Activated CD4-positive, alpha-beta T cell treated with anti-CD3 and anti-CD28 coated beads for 36 hours (primary cell): ENCODE measurements at regions of chr2 and their contacts with region 1.

Region 1: GRCh38 chr2:230798769-230799399 is 65.9 kb upstream of the ITM2C start:
- DNase-seq: peak; percentile 63
- ATAC-seq: no peak
- H3K4me3 Mint-ChIP-seq: no peak overlapping the region
- H3K27ac Mint-ChIP-seq: peak overlapping the region; percentile 82
- H3K4me1 Mint-ChIP-seq: peaks cover 18% of the 10 kb centered on the region
- H3K27me3 Mint-ChIP-seq: no peaks in the 10 kb centered on the region

Region 2: GRCh38 chr2:230007931-230008707 is 790.8 kb before region 1 on chr2:
- CTCF ChIA-PET with region 1: interaction called, 8 read pairs
- POLR2A ChIA-PET with region 1: no interaction called
- intact Hi-C with region 1: loop called (anchors 5 kb)
- DNase-seq: peak; percentile 92
- ATAC-seq: peak; percentile 69
- H3K4me3 Mint-ChIP-seq: no peak overlapping the region
- H3K27ac Mint-ChIP-seq: no peak overlapping the region
- H3K4me1 Mint-ChIP-seq: peaks cover 5% of the 10 kb centered on the region
- H3K27me3 Mint-ChIP-seq: no peaks in the 10 kb centered on the region

Region 3: DNA sequence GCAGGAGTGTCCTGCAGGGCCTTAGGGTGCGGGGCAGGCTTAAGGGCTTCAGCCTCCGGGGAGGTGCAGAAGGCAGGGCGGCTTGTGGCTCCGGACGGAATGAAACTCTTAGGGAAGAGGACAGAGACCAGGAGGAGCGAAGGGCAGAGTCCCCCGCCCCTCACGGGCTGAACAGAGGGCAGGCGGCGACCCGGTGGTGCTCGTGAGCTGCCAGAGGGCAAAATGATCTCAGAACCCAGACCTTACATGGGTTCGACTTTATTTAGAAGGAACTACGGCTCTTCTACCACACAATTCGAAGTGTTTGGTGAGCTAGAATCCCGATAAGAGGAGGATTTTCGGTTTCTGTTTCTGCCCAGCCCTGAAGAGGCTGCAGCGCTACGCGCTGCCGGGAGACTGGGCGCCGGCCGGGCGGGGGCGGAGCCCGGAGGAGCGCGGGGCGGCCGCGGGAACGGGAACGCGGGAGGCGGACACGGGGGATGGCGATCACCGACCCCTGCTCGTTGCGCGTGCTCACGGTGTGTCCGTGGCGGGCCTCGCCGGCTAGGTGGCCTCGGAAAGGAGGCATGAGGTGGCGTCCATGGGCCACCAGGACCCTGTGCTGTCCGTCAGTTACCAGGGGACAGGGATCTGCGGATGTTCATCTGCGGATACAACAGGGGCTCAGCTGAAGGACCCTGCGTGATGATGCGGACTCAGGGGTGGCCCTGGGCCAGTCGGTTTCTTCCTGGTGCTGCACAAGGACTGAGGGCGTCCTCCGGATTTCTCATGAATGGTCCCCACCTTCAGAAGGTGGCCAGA is 387.1 kb before region 1 on chr2:
- CTCF ChIA-PET with region 1: interaction called, 3 read pairs
- POLR2A ChIA-PET with region 1: no interaction called
- intact Hi-C with region 1: loop called (anchors 2 to 10 kb)
- DNase-seq: peak; percentile 76
- ATAC-seq: peak; percentile 66
- H3K4me3 Mint-ChIP-seq: peak overlapping the region; percentile 85
- H3K27ac Mint-ChIP-seq: peak overlapping the region; percentile 96
- H3K4me1 Mint-ChIP-seq: peaks cover 60% of the 10 kb centered on the region
- H3K27me3 Mint-ChIP-seq: no peaks in the 10 kb centered on the region

Region 4: GRCh38 chr2:230472621-230473018 is 326.3 kb before region 1 on chr2:
- CTCF ChIA-PET with region 1: interaction called, 3 read pairs
- POLR2A ChIA-PET with region 1: no interaction called
- intact Hi-C with region 1: loop called in 1 of 2 experiments (anchors 5 kb)
- DNase-seq: peak; percentile 77
- ATAC-seq: peak; percentile 95
- H3K4me3 Mint-ChIP-seq: peak overlapping the region; percentile 17
- H3K27ac Mint-ChIP-seq: peak overlapping the region; percentile 81
- H3K4me1 Mint-ChIP-seq: peaks cover 35% of the 10 kb centered on the region
- H3K27me3 Mint-ChIP-seq: no peaks in the 10 kb centered on the region

Region 5: DNA sequence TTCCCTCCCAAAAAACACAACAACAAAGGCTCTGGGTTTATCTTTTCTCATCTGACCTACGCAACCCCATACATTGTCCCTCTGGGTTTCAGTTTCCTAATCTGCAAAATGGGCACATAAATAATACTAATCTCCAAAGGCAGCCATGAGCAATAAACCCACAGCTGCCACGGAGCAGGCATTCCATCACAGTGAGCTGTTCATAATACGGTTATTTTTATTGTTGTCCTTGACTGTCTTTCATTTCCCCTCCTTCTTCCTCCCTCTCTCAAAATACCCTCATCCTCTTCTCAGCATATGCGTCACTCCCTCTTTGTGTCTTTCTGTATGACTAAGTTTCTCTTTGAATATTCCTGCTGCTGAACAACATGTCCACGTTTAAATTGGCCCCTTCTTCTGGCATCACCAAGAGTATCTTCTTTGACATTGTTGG is 216.0 kb before region 1 on chr2:
- CTCF ChIA-PET with region 1: no interaction called
- POLR2A ChIA-PET with region 1: no interaction called
- intact Hi-C with region 1: no loop called
- DNase-seq: peak; percentile 70
- ATAC-seq: peak; percentile 93
- H3K4me3 Mint-ChIP-seq: no peak overlapping the region
- H3K27ac Mint-ChIP-seq: peak overlapping the region; percentile 75
- H3K4me1 Mint-ChIP-seq: peaks cover 25% of the 10 kb centered on the region
- H3K27me3 Mint-ChIP-seq: no peaks in the 10 kb centered on the region

Region 6: DNA sequence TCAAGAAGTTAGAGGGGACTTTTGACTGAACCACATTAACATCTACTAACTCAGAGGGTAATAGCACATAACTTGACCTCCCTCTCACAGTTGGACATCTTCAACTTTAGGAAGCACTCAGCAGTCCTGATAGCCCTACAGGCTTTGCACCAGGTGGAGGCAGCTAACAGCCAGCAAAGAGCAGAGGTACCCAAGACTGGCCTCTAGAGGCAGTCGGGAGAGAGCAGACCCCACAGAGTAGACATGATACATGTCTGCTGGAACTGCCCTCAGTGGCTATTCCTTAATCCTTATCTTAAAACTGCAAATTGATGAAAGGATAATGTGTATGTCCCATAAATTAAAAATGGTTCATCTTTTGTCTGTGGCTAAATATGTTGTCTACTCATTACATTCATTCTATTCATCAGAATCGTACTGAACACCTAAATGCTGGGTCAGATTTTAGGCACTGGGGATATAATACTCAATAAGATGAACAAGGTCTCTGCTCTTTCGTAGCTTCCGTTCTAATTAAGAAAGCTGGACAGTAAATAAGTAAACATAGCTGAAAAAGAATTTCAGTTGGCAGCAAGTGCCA is 36.5 kb before region 1 on chr2:
- CTCF ChIA-PET with region 1: interaction called, 12 read pairs
- POLR2A ChIA-PET with region 1: no interaction called
- intact Hi-C with region 1: no loop called
- DNase-seq: peak; percentile 44
- ATAC-seq: peak; percentile 80
- H3K4me3 Mint-ChIP-seq: no peak overlapping the region
- H3K27ac Mint-ChIP-seq: peak overlapping the region; percentile 20
- H3K4me1 Mint-ChIP-seq: peaks cover 69% of the 10 kb centered on the region
- H3K27me3 Mint-ChIP-seq: no peaks in the 10 kb centered on the region

Region 7: DNA sequence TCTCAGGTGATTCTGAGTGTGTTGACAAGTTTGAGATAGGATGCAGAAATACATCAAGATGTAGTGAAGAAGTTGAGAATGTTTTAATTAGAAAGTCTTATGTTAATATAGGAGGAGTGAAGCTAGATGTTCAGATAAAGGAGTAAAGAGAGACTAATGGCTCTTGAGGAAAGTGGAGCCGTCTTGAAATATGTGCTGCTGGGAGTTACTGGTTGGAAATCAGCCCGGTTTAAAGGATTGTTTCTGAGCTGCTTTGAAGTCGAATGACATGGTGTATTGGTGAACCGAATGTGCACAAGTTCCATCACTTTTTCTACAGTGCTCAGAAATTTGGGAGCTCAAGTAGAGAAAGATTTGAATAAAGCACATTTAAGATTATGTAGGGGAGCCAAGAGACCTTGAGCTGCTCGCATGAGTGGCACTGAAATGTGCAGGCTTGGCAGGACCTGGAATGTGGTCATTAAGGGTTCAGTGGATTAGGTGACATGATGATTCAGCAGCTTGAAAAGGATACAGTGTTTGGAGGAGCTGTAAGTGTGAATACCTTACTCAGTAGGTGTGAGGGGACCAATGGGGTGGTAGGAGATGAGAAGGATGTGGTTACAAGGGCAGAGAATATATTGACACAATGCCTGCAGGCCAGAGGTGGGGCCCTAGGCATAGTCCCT is 17.6 kb before region 1 on chr2:
- CTCF ChIA-PET with region 1: interaction called, 24 read pairs
- POLR2A ChIA-PET with region 1: interaction called, 6 read pairs
- intact Hi-C with region 1: loop called in 1 of 2 experiments (anchors 2 kb)
- DNase-seq: peak; percentile 66
- ATAC-seq: peak; percentile 94
- H3K4me3 Mint-ChIP-seq: no peak overlapping the region
- H3K27ac Mint-ChIP-seq: peak overlapping the region; percentile 86
- H3K4me1 Mint-ChIP-seq: peaks cover 84% of the 10 kb centered on the region
- H3K27me3 Mint-ChIP-seq: no peaks in the 10 kb centered on the region